ENCODE measurements at regions of chr16 and their contacts with region 1.

Region 1: GRCh38 chr16:4402439-4403132 is 13.8 kb downstream of the CORO7 start:
- DNase-seq: peak; percentile 84
- H3K4me3 ChIP-seq: peak overlapping the region; percentile 33
- H3K27ac ChIP-seq: no peak overlapping the region
- H3K4me1 ChIP-seq: no peaks in the 10 kb centered on the region
- H3K27me3 ChIP-seq: no peaks in the 10 kb centered on the region
- CTCF ChIP-seq: peak; percentile 96

Region 2: DNA sequence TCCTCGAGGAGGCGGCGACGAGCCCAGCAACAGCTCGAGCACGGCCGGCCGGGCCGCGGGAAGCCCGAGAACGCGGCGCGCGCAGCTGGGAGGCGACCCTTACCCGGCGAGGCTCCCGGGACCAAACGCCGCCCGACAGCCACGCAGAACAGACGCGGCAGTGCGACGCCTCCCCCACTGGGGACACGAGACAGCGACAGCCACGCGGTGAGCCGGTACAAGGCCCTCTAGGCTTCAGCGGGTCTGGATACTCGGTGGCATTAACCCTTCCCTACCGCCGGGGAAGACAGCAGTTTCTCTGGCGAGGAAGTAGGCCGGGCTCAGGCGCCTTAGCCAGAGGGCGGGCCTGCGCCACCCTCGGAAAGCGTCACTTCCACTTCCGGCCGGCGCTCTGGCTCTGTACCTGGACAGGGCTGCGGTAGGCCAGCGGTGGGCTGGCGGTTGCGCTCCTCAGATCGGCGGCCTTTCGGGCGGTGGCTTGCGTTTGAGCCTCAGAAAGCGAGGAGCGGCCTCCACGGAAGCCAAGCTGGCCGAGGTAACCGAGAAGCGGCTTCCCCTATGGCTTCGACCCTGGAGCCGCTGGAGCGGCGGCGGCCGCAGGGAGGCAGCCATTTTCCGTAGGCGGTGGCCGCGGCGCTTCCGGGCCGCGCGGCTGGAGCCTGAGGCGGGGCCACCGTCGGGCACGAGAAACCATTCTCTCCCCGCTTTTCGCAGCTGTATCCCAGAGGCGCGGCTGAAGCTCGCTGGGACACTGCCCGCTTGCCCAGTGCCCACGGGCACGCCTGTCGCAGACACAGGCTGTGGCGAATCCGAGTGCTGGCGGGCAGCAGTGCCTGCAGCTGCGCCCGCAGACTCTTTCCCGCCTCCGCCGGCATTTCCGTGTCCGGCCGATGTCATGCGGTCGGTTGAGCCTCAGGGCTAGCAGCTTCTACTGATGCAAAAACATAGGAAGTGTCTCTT is 1097.2 kb before region 1 on chr16 and contains the starts of genes TIGD7 and ZNF75A:
- CTCF ChIA-PET with region 1: no interaction called
- POLR2A ChIA-PET with region 1: no interaction called
- intact Hi-C with region 1: no loop called
- DNase-seq: peak; percentile 94
- H3K4me3 ChIP-seq: peak within 1 kb of the TSS; percentile 61
- H3K27ac ChIP-seq: peak within 1 kb of the TSS; percentile 90
- H3K4me1 ChIP-seq: peaks cover 6% of the 10 kb centered on the region
- H3K27me3 ChIP-seq: no peaks in the 10 kb centered on the region
- CTCF ChIP-seq: no peak; the same call in 1 of the 2 replicates
- total RNA-seq, gene TIGD7: 5.7 and 7.9 TPM in 2 replicates
- total RNA-seq, gene ZNF75A: 40.9 and 44.5 TPM in 2 replicates

Region 3: DNA sequence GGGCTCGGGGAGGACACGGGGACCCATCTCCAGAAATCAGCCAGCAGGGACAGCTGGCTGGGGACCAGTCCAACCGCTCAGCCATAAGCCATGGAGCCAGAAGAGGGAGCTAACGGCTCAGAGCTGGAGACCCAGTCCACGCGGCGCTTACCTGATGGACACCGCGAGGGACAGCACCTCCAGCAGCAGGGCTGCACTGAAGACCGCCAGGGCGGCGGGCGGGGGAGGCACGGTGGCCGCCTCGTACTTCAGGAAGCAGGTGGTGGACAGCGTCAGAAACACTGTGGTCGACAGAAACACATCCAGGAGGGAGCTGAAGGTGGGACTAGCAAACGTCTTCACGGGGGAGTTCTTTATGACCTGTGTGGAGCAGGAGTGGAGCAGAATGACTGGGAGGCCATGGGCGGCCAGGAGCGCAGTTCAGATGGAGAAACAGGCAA is 419.5 kb before region 1 on chr16:
- CTCF ChIA-PET with region 1: interaction called, 4 read pairs
- POLR2A ChIA-PET with region 1: no interaction called
- intact Hi-C with region 1: loop called (anchors 5 kb)
- DNase-seq: peak; percentile 70
- H3K4me3 ChIP-seq: no peak overlapping the region
- H3K27ac ChIP-seq: no peak overlapping the region
- H3K4me1 ChIP-seq: peaks cover 16% of the 10 kb centered on the region
- H3K27me3 ChIP-seq: no peaks in the 10 kb centered on the region
- CTCF ChIP-seq: peak; percentile 90

Region 4: DNA sequence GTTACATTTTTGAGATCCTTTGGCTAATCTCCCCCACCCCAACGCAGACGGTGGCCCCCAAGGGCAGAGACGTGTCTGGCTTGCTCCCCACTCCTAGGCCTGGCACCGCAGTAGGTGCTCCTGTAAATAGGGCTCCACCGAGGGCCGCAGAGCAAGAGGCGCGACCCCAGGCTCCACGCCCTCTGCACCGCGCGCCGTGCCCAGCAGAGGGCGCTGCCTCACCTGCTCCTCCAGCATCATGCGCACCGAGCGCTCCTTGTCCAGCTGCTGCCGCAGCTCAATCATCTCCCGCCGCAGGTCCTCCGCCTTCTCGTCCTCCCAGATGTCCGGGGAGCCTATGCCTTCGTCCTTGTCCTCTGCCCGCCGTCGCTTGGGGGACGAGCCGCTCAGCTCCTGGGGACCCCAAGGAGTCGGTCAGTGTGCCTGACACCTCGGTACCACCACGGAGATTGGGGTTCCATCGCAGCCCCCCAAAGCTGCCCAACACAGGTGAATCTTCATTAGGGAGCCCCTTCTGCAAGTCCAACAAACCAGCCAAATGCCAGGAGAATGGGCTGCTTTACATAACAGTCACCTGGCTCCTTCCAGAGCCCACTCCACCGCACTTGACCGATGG is 140.9 kb before region 1 on chr16:
- CTCF ChIA-PET with region 1: interaction called, 3 read pairs
- POLR2A ChIA-PET with region 1: no interaction called
- intact Hi-C with region 1: loop called (anchors 2 kb)
- DNase-seq: peak; percentile 49
- H3K4me3 ChIP-seq: no peak overlapping the region
- H3K27ac ChIP-seq: no peak overlapping the region
- H3K4me1 ChIP-seq: no peaks in the 10 kb centered on the region
- H3K27me3 ChIP-seq: no peaks in the 10 kb centered on the region
- CTCF ChIP-seq: peak; percentile 80

Region 5: DNA sequence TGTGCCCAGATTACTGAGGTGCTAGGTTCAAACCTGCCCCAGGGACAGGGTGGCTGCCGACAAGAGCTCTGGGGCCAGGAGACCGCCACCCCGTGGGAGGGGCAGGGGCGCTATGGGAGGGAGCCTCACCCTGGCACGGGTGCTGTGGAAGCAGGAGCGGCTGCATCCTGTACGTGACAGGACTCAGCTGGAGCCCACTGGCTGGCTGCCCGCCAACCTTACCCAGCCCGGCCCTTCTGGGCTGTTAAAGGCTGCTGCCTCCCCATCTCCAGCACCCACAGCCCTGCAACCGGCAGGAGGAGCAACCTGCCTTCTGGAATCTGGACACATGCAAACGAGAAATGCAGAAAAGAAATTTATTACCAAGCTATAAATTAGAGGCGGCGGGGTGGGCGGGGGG is 62.7 kb before region 1 on chr16:
- CTCF ChIA-PET with region 1: interaction called, 12 read pairs
- POLR2A ChIA-PET with region 1: no interaction called
- intact Hi-C with region 1: no loop called
- DNase-seq: peak; percentile 90
- H3K4me3 ChIP-seq: no peak overlapping the region
- H3K27ac ChIP-seq: peak overlapping the region; percentile 53
- H3K4me1 ChIP-seq: peaks cover 23% of the 10 kb centered on the region
- H3K27me3 ChIP-seq: no peaks in the 10 kb centered on the region
- CTCF ChIP-seq: peak; percentile 54

Region 6: DNA sequence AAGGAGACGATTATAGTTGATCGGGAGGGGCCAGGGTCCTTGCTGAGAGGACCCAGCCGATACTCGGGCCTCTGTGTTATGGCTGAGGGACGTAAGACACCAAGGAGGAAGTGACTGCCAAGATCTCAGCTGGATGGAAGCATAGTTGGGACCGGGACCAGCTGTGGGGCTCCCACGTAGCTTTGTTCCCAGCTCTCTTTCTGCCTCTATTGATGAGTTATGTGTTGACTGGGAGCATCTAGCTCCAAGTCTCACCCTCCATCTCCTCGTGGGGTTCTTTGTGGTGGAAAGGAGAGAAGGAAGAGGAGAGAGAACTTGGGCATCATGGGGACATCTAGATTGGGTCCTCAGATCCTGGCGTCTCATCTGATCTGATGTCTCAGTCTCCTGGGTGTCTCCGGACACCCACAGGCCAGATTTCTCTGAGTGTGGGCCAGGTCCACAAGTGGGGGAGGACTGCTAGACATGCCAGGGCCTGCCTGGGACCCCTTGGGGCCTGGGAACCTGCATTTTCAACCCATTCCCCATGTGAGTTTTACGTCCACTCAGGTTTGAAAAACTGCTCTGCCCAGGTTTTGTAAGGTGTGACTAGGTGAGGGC is 223.1 kb after region 1 on chr16:
- CTCF ChIA-PET with region 1: interaction called, 11 read pairs
- POLR2A ChIA-PET with region 1: no interaction called
- intact Hi-C with region 1: no loop called
- DNase-seq: peak; percentile 30
- H3K4me3 ChIP-seq: peak overlapping the region; percentile 99
- H3K27ac ChIP-seq: peak overlapping the region; percentile 92
- H3K4me1 ChIP-seq: peaks cover 6% of the 10 kb centered on the region
- H3K27me3 ChIP-seq: no peaks in the 10 kb centered on the region
- CTCF ChIP-seq: no peak

Measured in A673 (cell line).